Ascending aorta (tissue), 2 donors: ENCODE measurements at regions of chr5 and their contacts with region 1.

Region 1: DNA sequence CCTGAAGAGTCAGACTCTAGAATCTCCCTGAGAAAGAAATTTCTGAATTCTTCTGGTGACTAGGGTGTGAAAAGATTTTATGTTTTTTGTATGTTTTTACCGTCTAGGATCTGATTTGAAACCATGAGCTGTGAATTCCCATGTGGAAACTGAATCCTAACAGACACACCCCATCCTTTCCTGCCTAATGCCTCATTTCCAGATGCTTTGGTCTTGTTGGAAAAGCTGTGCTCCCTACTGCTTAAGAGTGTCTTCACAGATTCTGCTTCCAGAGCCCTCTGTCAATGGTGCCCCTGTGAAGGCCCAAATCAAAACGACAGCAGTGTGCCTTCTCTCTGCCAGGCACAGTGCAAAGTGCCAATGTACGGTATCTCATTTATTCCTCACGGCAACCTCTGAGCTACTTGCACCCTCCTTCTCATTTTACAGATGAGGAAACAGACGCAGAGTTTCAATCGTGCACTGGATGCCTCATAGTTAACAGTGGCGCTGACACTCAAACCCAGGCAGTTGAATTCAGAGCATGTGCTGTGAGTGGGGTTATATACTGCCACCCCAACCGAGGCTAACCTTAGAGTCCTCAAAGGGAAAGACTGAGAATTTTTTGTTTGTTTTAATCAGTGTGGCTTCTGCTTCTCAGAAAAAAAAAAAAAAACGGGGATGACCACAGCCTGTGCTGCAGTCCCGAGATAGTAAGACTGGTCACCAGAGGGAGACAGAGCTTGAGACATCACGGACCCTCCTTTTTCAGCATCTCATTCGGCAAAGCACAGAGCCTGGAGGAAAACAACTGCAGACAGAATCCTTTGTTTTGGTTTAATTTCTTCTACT is 188.4 kb downstream of the SNCAIP start:
- DNase-seq: no peak
- H3K4me3 ChIP-seq: peak overlapping the region in 1 of 2 donors; percentile 22
- H3K27ac ChIP-seq: peak overlapping the region; percentile 59 to 63
- H3K4me1 ChIP-seq: peaks cover 5 to 9% of the 10 kb centered on the region in 2 donors
- H3K27me3 ChIP-seq: no peaks in the 10 kb centered on the region
- CTCF ChIP-seq: peak in 2 of 3 experiments; percentile 28 to 43

Region 2: GRCh38 chr5:121976979-121977378 is 523.5 kb before region 1 on chr5:
- intact Hi-C with region 1: no loop called
- DNase-seq: no peak
- H3K4me3 ChIP-seq: no peak overlapping the region
- H3K27ac ChIP-seq: no peak overlapping the region
- H3K4me1 ChIP-seq: peaks cover 0 to 10% of the 10 kb centered on the region in 2 donors
- H3K27me3 ChIP-seq: no peaks in the 10 kb centered on the region
- CTCF ChIP-seq: no peak

Region 3: DNA sequence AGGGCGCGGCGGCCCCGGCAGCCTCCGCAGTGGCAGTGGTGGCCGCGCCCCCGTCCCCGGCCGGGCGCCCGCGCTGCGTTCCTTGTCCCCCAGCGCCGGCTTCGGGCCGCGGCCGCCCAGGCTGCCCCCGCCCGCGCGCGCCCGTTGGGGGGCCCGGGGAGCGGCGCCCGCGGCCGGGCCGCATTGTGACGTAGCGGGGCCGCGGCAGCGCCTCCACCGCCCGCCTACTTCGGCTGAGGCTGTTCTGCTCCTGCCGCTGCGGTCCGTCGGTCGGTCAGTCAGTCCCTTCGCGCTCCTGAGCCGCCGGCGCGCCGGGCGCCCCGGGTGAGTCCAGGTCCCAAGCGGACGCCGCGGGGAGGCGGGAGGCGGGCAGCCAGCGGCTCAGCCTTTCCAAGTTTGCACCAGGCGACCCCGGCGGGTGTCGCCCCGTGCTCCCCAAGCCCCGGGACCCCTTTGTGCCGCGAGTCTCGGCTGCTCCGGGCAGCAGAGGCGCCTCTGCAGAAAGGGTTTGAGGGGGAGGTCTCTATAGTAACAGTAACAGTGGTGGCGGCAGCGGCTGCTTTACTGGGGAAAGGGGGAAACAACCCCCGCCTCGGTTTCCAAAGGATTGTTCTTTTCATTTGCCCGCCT is 188.4 kb before region 1 on chr5 and contains the start of gene SNCAIP:
- intact Hi-C with region 1: loop called (anchors 2 kb)
- DNase-seq: peak in 1 of 2 donors; percentile 77
- H3K4me3 ChIP-seq: peak within 1 kb of the TSS; percentile 79
- H3K27ac ChIP-seq: peak within 1 kb of the TSS; percentile 84 to 86
- H3K4me1 ChIP-seq: peaks cover 0 to 8% of the 10 kb centered on the region in 2 donors
- H3K27me3 ChIP-seq: no peaks in the 10 kb centered on the region
- CTCF ChIP-seq: no peak
- total RNA-seq, gene SNCAIP: 2.9 TPM

Region 4: DNA sequence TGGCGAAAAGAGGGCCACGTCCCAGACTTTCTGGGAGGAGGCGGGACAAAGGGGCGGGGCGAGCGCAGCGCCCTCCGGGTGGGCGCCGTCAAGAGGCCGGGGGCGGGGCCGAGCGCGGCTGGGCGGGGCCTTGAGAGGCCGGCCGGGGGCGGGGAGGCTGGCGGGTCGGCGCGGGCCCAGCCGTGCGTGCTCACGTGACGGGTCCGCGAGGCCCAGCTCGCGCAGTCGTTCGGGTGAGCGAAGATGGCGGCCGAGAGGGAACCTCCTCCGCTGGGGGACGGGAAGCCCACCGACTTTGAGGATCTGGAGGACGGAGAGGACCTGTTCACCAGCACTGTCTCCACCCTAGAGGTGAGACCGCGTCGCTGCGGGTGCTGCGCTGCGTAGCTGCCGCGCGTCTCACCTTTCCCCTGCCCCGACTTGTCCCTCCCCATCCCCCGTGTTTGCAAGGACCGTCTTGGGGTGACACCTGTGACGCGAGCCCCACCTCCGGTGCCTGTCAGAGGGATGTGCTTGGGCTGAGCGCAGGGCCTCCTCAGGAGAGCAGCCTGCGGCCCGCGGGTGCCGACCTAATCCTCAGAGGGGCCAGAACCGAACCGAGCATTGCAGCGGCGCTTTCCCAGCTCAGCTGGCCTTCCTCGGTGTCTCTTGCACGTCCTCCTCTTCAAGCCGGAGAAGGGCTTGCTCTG is 274.5 kb after region 1 on chr5 and contains the start of gene SNX2:
- intact Hi-C with region 1: loop called (anchors 5 kb)
- DNase-seq: peak; percentile 71 to 97
- H3K4me3 ChIP-seq: peak within 1 kb of the TSS; percentile 77 to 99
- H3K27ac ChIP-seq: peak within 1 kb of the TSS; percentile 79 to 94
- H3K4me1 ChIP-seq: peaks cover 0 to 15% of the 10 kb centered on the region in 2 donors
- H3K27me3 ChIP-seq: no peaks in the 10 kb centered on the region
- CTCF ChIP-seq: no peak
- total RNA-seq, gene SNX2: 15.6 TPM

Region 5: GRCh38 chr5:123157791-123158581 is 657.5 kb after region 1 on chr5:
- intact Hi-C with region 1: loop called (anchors 10 kb)
- DNase-seq: no peak
- H3K4me3 ChIP-seq: peak overlapping the region in 1 of 2 donors; percentile 24
- H3K27ac ChIP-seq: peak overlapping the region; percentile 79 to 82
- H3K4me1 ChIP-seq: peaks cover 5 to 55% of the 10 kb centered on the region in 2 donors
- H3K27me3 ChIP-seq: no peaks in the 10 kb centered on the region
- CTCF ChIP-seq: peak in 1 of 3 experiments; percentile 11

Region 6: GRCh38 chr5:123371575-123372179 is 871.2 kb after region 1 on chr5:
- intact Hi-C with region 1: loop called (anchors 5 kb)
- DNase-seq: peak in 1 of 2 donors; percentile 74
- H3K4me3 ChIP-seq: no peak overlapping the region
- H3K27ac ChIP-seq: no peak overlapping the region
- H3K4me1 ChIP-seq: peaks cover 0 to 8% of the 10 kb centered on the region in 2 donors
- H3K27me3 ChIP-seq: no peaks in the 10 kb centered on the region
- CTCF ChIP-seq: peak in 2 of 3 experiments; percentile 44 to 50